GM10248 (cell line): ENCODE measurements at regions of chr7 and their contacts with region 1.

Region 1: DNA sequence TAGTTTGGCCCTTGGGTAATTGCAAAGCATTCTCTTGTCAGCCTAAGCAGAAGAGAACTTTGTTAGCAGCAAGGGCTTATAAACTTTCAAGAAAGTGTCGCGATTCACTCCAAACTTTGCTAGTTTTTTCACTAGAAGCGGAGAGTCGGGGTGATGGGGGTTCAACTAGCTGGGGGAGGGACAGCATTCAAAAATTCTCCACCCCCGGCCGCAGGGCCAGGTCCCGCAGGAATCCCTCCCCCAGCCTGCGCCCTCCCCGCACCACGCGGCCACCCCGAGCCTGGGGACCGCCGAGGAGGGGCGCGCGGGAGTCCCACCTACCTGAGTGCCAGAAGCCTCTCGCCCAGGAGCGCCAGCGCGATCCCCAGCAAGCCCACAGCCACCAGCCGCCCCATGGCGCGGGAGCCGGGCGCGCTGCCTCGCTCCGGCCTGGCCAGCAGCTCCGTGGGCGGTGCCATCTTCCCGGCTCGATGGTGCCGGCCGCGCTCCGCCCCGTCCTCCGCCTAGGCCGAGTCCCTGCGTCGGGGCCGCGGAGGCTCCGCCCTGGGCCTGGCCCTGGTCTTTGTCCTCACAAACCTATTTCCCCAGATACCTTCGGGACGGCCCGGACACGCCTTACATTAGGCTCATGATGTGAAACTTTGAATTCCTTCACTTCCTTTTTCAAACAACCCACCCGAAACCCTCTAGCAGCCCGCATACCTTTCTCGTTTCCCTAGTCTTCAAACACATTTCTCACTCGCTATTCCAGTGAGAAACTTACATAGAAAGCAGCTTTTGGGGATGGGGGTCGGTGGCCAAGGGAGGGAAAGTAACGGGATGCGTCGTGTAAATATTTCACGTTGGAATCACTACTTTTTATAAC is at the start of gene PON2:
- DNase-seq: peak; percentile 84
- CTCF ChIP-seq: no peak

Region 2: DNA sequence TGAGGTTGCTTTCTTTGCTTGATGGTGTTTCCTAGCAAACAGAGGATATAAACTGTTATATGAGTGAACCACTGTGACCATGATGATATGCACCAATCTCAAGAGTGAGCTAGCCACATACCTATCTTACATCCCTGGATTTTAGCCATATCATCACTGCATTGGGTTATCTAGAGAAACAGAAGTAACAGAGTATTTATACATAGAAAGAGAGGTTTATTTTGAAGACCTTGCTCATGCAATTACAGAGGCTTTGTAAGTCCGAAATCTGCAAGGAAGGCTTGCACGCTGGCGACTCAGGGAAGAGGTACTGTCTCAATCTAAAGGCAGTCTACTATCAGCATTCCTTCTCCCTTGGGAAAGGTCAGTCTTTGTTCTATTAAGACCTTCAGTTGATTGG is 11.8 kb after region 1 on chr7:
- CTCF ChIA-PET with region 1: interaction called, 13 read pairs
- POLR2A ChIA-PET with region 1: interaction called, 3 read pairs
- DNase-seq: no peak
- CTCF ChIP-seq: no peak